ENCODE measurements at regions of chr19 and their contacts with region 1.

Region 1: GRCh38 chr19:36605101-36605876 is at the start of gene ZNF382:
- DNase-seq: peak; percentile 85
- H3K4me3 Mint-ChIP-seq: peak within 1 kb of the TSS; percentile 90
- H3K27ac Mint-ChIP-seq: peak within 1 kb of the TSS; percentile 95
- H3K4me1 Mint-ChIP-seq: peaks cover 26% of the 10 kb centered on the region
- H3K27me3 Mint-ChIP-seq: no peaks in the 10 kb centered on the region
- total RNA-seq, gene ZNF382: 10.2 and 10.8 TPM in 2 replicates

Region 2: GRCh38 chr19:36573020-36573885 is 32.0 kb before region 1 on chr19 and contains the start of gene ZNF529:
- intact Hi-C with region 1: loop called (anchors 1 kb)
- DNase-seq: peak; percentile 85
- H3K4me3 Mint-ChIP-seq: peak within 1 kb of the TSS; percentile 89
- H3K27ac Mint-ChIP-seq: peak within 1 kb of the TSS; percentile 98
- H3K4me1 Mint-ChIP-seq: peaks cover 31% of the 10 kb centered on the region
- H3K27me3 Mint-ChIP-seq: no peaks in the 10 kb centered on the region
- total RNA-seq, gene ZNF529: 20.3 and 20.7 TPM in 2 replicates

Region 3: DNA sequence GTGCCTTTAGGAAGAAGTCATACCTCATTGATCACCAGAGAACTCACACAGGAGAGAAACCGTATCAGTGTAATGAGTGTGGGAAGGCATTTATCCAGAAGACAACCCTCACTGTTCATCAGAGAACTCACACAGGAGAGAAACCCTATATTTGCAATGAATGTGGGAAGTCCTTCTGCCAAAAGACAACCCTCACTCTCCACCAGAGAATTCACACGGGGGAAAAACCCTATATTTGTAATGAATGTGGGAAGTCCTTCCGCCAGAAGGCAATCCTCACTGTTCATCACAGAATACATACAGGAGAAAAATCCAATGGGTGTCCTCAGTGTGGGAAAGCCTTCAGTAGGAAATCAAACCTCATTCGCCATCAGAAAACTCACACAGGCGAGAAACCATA is 21.8 kb after region 1 on chr19:
- intact Hi-C with region 1: no loop called
- DNase-seq: no peak
- H3K4me3 Mint-ChIP-seq: no peak overlapping the region
- H3K27ac Mint-ChIP-seq: no peak overlapping the region
- H3K4me1 Mint-ChIP-seq: no peaks in the 10 kb centered on the region
- H3K27me3 Mint-ChIP-seq: no peaks in the 10 kb centered on the region

Region 4: GRCh38 chr19:36819130-36819630 is 213.9 kb after region 1 on chr19:
- intact Hi-C with region 1: no loop called
- DNase-seq: no peak
- H3K4me3 Mint-ChIP-seq: no peak overlapping the region
- H3K27ac Mint-ChIP-seq: no peak overlapping the region
- H3K4me1 Mint-ChIP-seq: no peaks in the 10 kb centered on the region
- H3K27me3 Mint-ChIP-seq: no peaks in the 10 kb centered on the region

Measured in activated T-helper 1 cell treated with anti-CD3 and anti-CD28 coated beads, Interleukin-12 subunit alpha, Interleukin-12 subunit beta, Interleukin-2, Interleukin-4 antibody, amounts not matched to agents 30 ng/mL and 10 ng/mL and 1 ng/mL, durations not matched to agents 14 hours and 24 hours and 36 hours (primary cell).